ENCODE measurements at regions of chr12 and their contacts with region 1.

Region 1: DNA sequence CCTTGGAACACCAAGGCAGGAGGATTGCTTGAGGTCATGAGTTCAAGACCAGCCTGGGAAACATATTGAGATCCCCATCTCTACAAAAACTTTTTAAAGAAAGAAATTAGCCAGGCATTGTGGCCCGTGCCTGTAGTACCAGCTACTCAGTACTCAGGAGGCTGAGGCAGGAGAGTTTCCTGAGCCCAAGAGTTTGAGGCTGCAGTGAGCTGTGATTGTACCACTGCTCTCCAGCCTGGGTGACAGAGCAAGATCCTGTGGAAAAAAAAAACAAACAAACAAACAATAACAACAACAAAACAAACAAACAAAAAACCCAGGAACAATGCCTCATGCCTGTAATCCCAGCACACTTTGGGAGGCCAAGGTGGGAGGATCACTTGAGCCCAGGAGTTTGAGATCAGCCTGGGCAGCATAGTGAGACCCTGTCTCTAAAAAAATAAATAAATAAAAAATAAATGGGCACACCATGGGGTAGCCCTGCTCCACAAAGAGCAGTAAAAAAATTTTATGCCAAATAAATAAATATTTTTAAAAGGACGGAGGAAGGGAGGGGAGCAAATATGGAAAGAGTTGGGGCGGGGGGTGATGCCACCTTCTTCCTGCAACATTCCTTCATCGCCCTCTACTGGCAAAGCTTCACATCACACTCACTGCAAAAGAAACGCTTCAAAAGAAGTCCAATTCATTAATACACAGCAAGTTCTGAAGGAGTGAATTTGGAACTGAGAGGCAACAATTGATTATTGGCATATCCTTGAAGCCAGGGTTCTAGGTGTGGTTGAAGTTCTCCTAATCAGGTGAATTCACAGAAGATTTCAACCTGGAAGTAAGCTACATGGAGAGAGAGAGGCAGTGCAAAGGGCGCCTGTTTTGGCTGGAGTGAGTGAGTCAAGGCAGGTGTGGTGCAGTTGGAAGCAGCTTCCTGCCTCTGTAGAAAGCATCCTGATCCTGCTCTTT is 8.8 kb upstream of the GNPTAB start:
- DNase-seq: peak in 1 of 2 donors; percentile 67
- ATAC-seq: peak; percentile 82
- H3K4me3 ChIP-seq: peak overlapping the region in 1 of 2 donors; percentile 8
- H3K27ac ChIP-seq: no peak overlapping the region
- H3K4me1 ChIP-seq: no peaks in the 10 kb centered on the region
- H3K27me3 ChIP-seq: no peaks in the 10 kb centered on the region

Region 2: GRCh38 chr12:101743724-101744472 is 95.7 kb before region 1 on chr12:
- intact Hi-C with region 1: no loop called
- DNase-seq: no peak
- ATAC-seq: no peak
- H3K4me3 ChIP-seq: no peak overlapping the region
- H3K27ac ChIP-seq: no peak overlapping the region
- H3K4me1 ChIP-seq: no peaks in the 10 kb centered on the region
- H3K27me3 ChIP-seq: no peaks in the 10 kb centered on the region

Region 3: GRCh38 chr12:101773650-101774162 is 65.9 kb before region 1 on chr12:
- intact Hi-C with region 1: loop called (anchors 2 kb)
- DNase-seq: peak in 1 of 2 donors; percentile 69
- ATAC-seq: peak; percentile 88
- H3K4me3 ChIP-seq: no peak overlapping the region
- H3K27ac ChIP-seq: no peak overlapping the region
- H3K4me1 ChIP-seq: no peaks in the 10 kb centered on the region
- H3K27me3 ChIP-seq: no peaks in the 10 kb centered on the region

Region 4: GRCh38 chr12:101931498-101932326 is 92.1 kb after region 1 on chr12:
- intact Hi-C with region 1: no loop called
- DNase-seq: no peak
- ATAC-seq: no peak
- H3K4me3 ChIP-seq: no peak overlapping the region
- H3K27ac ChIP-seq: no peak overlapping the region
- H3K4me1 ChIP-seq: no peaks in the 10 kb centered on the region
- H3K27me3 ChIP-seq: no peaks in the 10 kb centered on the region

Region 5: DNA sequence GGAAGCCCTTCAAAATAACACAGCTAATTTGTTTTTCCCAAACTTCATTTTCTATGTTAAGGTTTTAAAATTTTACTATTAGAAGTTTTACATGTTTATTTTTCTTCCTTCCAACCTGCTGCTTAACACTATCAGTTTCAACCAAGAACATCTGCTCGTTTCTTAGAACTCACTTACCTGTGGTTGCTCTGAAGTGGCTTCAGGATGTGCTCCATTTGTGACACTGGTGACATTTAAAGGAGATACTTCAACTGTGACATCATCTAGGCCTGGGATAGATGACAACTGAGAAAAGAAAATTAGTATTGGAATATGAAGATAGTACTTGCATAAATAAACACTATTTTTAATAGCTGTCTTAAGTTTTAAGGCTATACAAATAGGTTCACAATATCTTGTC is 204.3 kb after region 1 on chr12:
- intact Hi-C with region 1: no loop called
- DNase-seq: no peak
- ATAC-seq: no peak
- H3K4me3 ChIP-seq: no peak overlapping the region
- H3K27ac ChIP-seq: no peak overlapping the region
- H3K4me1 ChIP-seq: no peaks in the 10 kb centered on the region
- H3K27me3 ChIP-seq: no peaks in the 10 kb centered on the region